Left lung (tissue), 14 donors: ENCODE measurements at regions of chr3 and their contacts with region 1.

Region 1: DNA sequence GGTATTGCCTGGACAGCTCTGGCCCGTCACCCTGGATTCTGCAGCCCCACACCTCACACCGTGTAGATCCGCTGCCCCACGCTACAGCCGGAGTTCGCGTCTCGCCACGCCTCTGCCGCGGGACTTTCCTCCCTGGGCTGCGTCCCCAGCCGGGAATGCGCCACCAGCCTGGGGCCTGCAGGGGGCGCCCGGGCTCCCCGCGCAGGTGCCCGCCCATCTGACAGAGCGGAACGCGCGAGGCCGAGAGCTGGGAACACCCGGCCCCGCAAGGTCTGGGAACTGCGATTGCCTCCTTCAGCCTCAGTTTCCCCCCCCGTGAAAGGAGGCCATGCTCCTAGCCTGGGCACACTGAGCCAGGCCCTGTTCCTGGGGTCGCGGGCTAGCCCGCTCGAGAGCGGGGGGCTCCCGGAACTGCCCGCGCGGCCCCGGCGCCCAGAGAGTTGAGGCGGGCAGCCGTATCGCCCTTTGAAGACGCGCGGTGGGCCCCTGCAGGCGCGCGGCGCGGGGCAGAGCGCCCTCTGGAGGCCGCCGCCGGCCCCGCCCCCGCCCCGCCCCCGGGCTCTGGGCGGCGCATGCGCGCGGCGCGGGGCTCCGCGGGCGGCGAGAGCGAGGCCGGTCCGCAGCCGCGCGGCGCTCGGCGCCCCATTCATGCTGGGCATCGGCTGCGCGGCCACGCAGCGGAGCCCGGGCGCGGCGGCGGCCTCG is at the start of gene PLXNA1:
- DNase-seq: peak; percentile 67 to 94 (median 80)
- ATAC-seq: peak; percentile 94
- H3K4me3 ChIP-seq: peak within 1 kb of the TSS; percentile 66 to 76
- H3K27ac ChIP-seq: peak within 1 kb of the TSS; percentile 77 to 84
- H3K4me1 ChIP-seq: peaks cover 12 to 30% of the 10 kb centered on the region in 2 donors
- H3K27me3 ChIP-seq: peaks cover 0 to 62% of the 10 kb centered on the region in 2 donors
- CTCF ChIP-seq: peak; percentile 89 to 96
- polyA plus RNA-seq, gene PLXNA1: 27.2 to 39.5 (median 29.2) TPM

Region 2: DNA sequence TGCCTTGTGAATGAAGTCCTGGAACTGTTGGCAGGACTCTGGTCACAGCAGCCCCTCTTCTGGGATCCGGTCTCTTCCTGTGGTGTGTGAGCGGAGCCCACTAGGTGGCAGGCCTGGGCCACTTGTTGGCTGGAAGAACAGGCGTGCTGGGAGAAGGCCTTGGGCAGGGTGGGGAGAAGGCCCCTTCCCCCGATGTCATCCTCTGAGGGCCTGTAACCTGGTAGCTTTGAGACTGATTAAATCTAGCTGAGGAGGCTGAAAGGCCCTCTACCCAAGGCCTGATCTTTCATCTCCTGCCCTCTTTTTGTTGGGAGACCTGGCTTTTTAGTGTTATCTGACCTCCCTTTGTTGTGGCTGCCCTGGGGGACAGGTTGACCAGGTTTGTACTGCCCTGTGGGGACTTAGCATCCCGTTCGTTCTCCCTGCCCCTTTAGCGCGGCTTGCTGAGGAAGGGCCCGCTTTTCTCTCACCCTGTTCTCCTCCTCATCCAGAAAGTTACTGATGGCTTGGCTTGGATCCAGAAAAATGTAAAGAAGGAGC is 230.2 kb before region 1 on chr3:
- intact Hi-C with region 1: loop called in 1 of 2 experiments (anchors 5 kb)
- DNase-seq: peak; percentile 73 to 89 (median 82)
- ATAC-seq: peak; percentile 88
- H3K4me3 ChIP-seq: no peak overlapping the region
- H3K27ac ChIP-seq: peak overlapping the region in 1 of 2 donors; percentile 28
- H3K4me1 ChIP-seq: peaks cover 4 to 10% of the 10 kb centered on the region in 2 donors
- H3K27me3 ChIP-seq: no peaks in the 10 kb centered on the region
- CTCF ChIP-seq: peak; percentile 75 to 76

Region 3: GRCh38 chr3:126777366-126777765 is 205.3 kb before region 1 on chr3:
- intact Hi-C with region 1: no loop called
- DNase-seq: no peak
- ATAC-seq: no peak
- H3K4me3 ChIP-seq: no peak overlapping the region
- H3K27ac ChIP-seq: no peak overlapping the region
- H3K4me1 ChIP-seq: peaks cover 0 to 8% of the 10 kb centered on the region in 2 donors
- H3K27me3 ChIP-seq: no peaks in the 10 kb centered on the region
- CTCF ChIP-seq: no peak

Region 4: GRCh38 chr3:127320536-127321121 is 338.0 kb after region 1 on chr3:
- intact Hi-C with region 1: no loop called
- DNase-seq: peak in 1 of 4 donors; percentile 9
- ATAC-seq: peak; percentile 37
- H3K4me3 ChIP-seq: no peak overlapping the region
- H3K27ac ChIP-seq: no peak overlapping the region
- H3K4me1 ChIP-seq: no peaks in the 10 kb centered on the region
- H3K27me3 ChIP-seq: no peaks in the 10 kb centered on the region
- CTCF ChIP-seq: no peak